Activated naive CD4-positive, alpha-beta T cell treated with anti-CD3 and anti-CD28 coated beads for 36 hours (primary cell): ENCODE measurements at regions of chr18 and their contacts with region 1.

Region 1: DNA sequence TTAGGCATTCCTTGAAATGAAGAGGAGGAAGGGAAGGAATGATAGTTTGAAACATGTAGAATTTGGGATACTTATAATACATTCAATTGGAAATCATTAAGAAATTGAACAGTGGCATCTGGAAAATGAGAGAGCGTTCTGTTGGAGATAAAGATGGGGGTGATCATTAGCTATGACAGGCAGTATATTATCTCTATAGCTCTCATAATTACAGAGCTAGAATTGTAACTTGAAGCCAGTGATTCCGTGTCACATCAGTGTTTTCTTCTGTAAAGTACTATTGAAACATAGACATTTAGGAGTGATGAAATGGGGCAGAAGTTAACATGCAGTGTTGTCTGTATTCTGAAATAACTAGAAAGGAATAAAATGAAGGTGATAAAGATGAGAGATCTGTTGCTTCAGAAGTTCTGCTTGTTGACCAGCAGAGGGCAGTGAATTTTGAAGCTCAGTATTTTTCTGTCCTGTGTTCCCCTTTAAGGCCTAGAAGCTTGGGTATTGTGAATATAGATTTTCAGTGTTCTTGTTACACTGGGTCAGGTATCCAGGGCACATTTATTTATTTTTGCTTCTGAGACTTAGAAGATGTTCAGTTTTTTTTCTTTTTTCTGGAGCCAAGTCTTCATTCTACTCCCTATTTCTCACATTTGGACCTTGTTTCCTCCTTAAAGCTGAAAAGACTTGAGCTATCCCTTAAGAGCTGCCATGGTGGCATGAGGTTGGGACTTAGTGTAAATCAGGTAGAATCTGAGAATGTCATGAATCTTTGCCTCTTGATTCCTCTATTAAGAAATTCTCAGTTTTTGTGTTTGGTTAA is 157.4 kb downstream of the TAF4B start:
- DNase-seq: no peak
- H3K4me3 Mint-ChIP-seq: no peak overlapping the region
- H3K27ac Mint-ChIP-seq: no peak overlapping the region
- H3K4me1 Mint-ChIP-seq: no peaks in the 10 kb centered on the region
- H3K27me3 Mint-ChIP-seq: no peaks in the 10 kb centered on the region

Region 2: GRCh38 chr18:26370037-26370436 is 13.6 kb before region 1 on chr18:
- CTCF ChIA-PET with region 1: interaction called, 13 read pairs
- intact Hi-C with region 1: no loop called
- DNase-seq: no peak
- H3K4me3 Mint-ChIP-seq: no peak overlapping the region
- H3K27ac Mint-ChIP-seq: no peak overlapping the region
- H3K4me1 Mint-ChIP-seq: no peaks in the 10 kb centered on the region
- H3K27me3 Mint-ChIP-seq: no peaks in the 10 kb centered on the region

Region 3: DNA sequence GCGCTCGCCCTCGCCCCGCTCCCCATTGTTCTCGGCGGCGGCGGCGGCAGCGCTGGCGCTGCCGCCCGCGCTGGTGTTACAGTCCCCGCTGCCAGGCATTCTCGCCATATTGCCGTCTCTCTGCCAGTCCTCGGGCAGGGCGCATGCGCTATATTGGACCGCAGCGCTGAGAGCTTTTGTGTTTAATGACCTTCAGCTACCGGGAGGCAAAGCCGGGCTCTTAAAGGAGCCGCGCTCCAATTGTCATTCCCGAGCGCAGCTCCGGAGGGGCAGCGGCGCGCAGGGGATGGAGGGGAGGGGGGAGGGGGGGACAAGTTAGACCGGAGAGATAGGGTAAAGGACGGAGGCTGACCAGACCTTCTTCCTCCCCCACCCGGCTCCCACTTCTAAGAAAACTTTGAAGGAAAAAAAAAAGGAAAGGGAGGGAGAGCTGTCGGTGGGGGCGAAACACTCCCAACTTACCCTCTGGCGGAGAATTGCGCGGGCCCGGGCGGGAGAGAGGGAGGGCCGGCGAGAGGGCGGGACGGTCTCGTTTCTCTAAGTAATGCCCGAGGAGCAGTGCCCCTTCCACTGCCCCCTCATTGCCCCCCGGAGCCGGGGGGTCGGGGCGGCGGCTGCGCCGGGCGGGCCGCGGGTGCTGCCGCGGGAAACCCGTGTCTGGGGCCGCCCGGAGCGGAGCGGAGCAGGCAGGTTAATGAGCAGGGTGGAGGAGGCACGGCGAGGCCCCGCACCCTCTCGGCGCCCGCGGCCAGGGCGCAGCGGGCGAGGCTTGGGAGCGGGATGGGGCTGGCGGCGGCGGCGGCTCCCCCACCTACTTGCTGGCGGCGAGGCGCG is 165.0 kb after region 1 on chr18 and contains the start of gene KCTD1:
- CTCF ChIA-PET with region 1: interaction called, 6 read pairs
- intact Hi-C with region 1: loop called (anchors 2 kb)
- DNase-seq: peak; percentile 76
- H3K4me3 Mint-ChIP-seq: peak within 1 kb of the TSS; percentile 79
- H3K27ac Mint-ChIP-seq: no peak within 1 kb of the TSS
- H3K4me1 Mint-ChIP-seq: peaks cover 30% of the 10 kb centered on the region
- H3K27me3 Mint-ChIP-seq: peaks cover 36% of the 10 kb centered on the region
- total RNA-seq, gene KCTD1: 1.7 to 1.9 TPM